ENCODE measurements at regions of chr1 and their contacts with region 1.

Region 1: DNA sequence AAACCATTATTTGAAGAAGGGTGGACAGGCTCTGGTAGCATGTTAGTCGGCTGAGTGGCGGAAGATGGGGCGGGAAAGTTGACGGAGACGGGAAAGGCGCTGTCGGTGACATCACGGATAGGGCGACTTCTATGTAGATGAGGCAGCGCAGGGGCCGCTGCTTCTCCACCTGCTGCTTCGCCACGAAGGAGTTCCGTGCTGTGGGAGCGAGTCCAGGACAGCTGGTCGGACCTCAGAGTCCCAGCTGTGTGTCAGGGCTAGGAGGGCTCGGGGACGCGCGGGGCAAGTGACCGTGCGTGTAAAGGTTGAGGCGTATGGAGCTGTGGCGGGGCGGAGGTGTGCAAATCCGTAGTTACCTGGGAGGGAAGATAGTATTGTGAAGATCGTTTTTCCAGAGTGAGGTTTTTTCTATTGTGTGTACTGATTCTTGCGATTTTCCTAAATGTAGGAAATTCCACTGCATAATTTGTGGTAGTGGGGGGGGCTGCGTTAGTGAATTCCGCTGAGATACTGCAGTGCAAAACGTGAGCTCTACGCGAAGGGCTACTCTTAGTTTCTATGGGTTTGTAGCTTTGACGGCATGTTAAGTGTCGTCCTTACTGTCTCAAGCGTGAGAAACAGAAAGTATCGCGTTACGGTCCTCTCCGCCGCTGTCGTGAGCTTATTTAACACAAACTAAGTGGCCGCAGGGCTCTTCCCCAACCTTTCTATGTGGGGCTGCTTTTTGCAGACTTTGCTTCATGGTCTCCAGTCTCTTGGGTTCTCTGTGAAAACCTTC is 111.2 kb upstream of the NBPF11 start:
- DNase-seq: peak; percentile 83
- ATAC-seq: peak; percentile 93
- H3K4me3 Mint-ChIP-seq: peak overlapping the region; percentile 75
- H3K27ac Mint-ChIP-seq: peak overlapping the region; percentile 99
- H3K4me1 Mint-ChIP-seq: peaks cover 21% of the 10 kb centered on the region
- H3K27me3 Mint-ChIP-seq: no peaks in the 10 kb centered on the region

Region 2: GRCh38 chr1:148158341-148159003 is 104.8 kb before region 1 on chr1:
- CTCF ChIA-PET with region 1: no interaction called
- POLR2A ChIA-PET with region 1: no interaction called
- intact Hi-C with region 1: loop called in 1 of 2 experiments (anchors 10 kb)
- DNase-seq: no peak
- ATAC-seq: no peak
- H3K4me3 Mint-ChIP-seq: peak overlapping the region; percentile 10
- H3K27ac Mint-ChIP-seq: no peak overlapping the region
- H3K4me1 Mint-ChIP-seq: peaks cover 10% of the 10 kb centered on the region
- H3K27me3 Mint-ChIP-seq: peaks cover 14% of the 10 kb centered on the region

Region 3: DNA sequence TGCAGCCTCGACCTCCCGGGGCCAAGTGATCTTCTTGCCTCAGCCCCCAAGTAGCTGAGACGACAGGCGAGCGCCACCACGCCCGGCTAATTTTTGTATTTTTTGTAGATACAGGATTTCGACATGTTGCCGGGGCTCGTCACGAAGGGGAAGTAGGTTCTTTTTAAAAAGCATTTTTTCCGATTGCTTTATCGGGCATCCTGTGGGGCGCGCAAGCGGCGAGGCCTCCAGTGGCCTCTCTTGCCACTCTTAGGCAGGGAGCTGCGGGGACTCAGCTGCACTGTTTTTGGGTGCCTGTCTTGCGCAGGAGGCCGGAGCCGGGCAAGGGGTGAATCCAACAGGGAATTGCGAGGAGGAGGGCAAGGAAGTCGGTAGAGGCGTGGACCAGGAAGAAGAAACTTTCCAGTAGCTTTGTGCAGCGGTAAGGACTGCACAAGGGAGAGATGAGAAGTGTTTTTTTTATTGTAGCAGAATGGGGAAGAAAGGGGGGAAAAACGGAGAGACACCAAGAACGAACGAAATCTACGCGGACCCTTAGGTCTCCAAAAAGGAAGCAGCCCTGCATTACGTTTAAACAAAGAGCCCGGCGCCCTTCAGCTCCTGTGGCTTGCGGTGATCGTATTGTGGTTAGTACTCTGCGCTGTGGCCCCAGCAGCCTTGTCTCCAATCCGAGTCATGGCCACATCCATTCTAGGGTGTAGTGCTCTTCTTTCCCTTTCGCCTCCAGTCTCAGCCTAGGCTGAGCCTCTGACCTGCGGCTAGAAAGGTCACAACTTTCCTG is 55.0 kb after region 1 on chr1:
- CTCF ChIA-PET with region 1: no interaction called
- POLR2A ChIA-PET with region 1: interaction called, 10 read pairs
- intact Hi-C with region 1: loop called in 1 of 2 experiments (anchors 5 kb)
- DNase-seq: peak; percentile 86
- ATAC-seq: peak; percentile 86
- H3K4me3 Mint-ChIP-seq: peak overlapping the region; percentile 78
- H3K27ac Mint-ChIP-seq: peak overlapping the region; percentile 92
- H3K4me1 Mint-ChIP-seq: peaks cover 33% of the 10 kb centered on the region
- H3K27me3 Mint-ChIP-seq: peaks cover 18% of the 10 kb centered on the region

Region 4: GRCh38 chr1:148352470-148353261 is 89.3 kb after region 1 on chr1:
- CTCF ChIA-PET with region 1: no interaction called
- POLR2A ChIA-PET with region 1: no interaction called
- intact Hi-C with region 1: no loop called
- DNase-seq: no peak
- ATAC-seq: no peak
- H3K4me3 Mint-ChIP-seq: no peak overlapping the region
- H3K27ac Mint-ChIP-seq: no peak overlapping the region
- H3K4me1 Mint-ChIP-seq: peaks cover 4% of the 10 kb centered on the region
- H3K27me3 Mint-ChIP-seq: peaks cover 20% of the 10 kb centered on the region

Region 5: GRCh38 chr1:148362626-148363438 is 99.5 kb after region 1 on chr1:
- CTCF ChIA-PET with region 1: no interaction called
- POLR2A ChIA-PET with region 1: interaction called, 10 read pairs
- intact Hi-C with region 1: no loop called
- DNase-seq: peak; percentile 75
- ATAC-seq: peak; percentile 67
- H3K4me3 Mint-ChIP-seq: peak overlapping the region; percentile 74
- H3K27ac Mint-ChIP-seq: peak overlapping the region; percentile 80
- H3K4me1 Mint-ChIP-seq: peaks cover 44% of the 10 kb centered on the region
- H3K27me3 Mint-ChIP-seq: peaks cover 3% of the 10 kb centered on the region

Region 6: GRCh38 chr1:148388260-148389027 is 125.1 kb after region 1 on chr1:
- CTCF ChIA-PET with region 1: no interaction called
- POLR2A ChIA-PET with region 1: interaction called, 55 read pairs
- intact Hi-C with region 1: loop called in 1 of 2 experiments (anchors 1 kb)
- DNase-seq: peak; percentile 94
- ATAC-seq: peak; percentile 88
- H3K4me3 Mint-ChIP-seq: peak overlapping the region; percentile 76
- H3K27ac Mint-ChIP-seq: peak overlapping the region; percentile 99
- H3K4me1 Mint-ChIP-seq: peaks cover 39% of the 10 kb centered on the region
- H3K27me3 Mint-ChIP-seq: no peaks in the 10 kb centered on the region